OCI-LY7 (cell line): ENCODE measurements at regions of chr11 and their contacts with region 1.

Region 1: GRCh38 chr11:67482825-67483798 is at the start of gene AIP:
- DNase-seq: peak; percentile 99
- H3K4me3 ChIP-seq: peak within 1 kb of the TSS; percentile 71
- H3K27ac ChIP-seq: peak within 1 kb of the TSS; percentile 87
- H3K4me1 ChIP-seq: peaks cover 44% of the 10 kb centered on the region
- CTCF ChIP-seq: no peak
- total RNA-seq, gene AIP: 123 and 125 TPM in 2 replicates

Region 2: GRCh38 chr11:67353317-67354074 is 129.6 kb before region 1 on chr11 and contains the start of gene POLD4:
- CTCF ChIA-PET with region 1: no interaction called
- POLR2A ChIA-PET with region 1: interaction called, 3 read pairs
- intact Hi-C with region 1: loop called (anchors 5 kb)
- DNase-seq: peak; percentile 99
- H3K4me3 ChIP-seq: peak within 1 kb of the TSS; percentile 77
- H3K27ac ChIP-seq: peak within 1 kb of the TSS; percentile 93
- H3K4me1 ChIP-seq: peaks cover 78% of the 10 kb centered on the region
- CTCF ChIP-seq: no peak
- total RNA-seq, gene POLD4: 146 and 153 TPM in 2 replicates

Region 3: GRCh38 chr11:67391304-67392132 is 91.6 kb before region 1 on chr11 and contains the start of gene RAD9A:
- CTCF ChIA-PET with region 1: interaction called, 5 read pairs
- POLR2A ChIA-PET with region 1: no interaction called
- intact Hi-C with region 1: loop called (anchors 1 kb)
- DNase-seq: peak; percentile 98
- H3K4me3 ChIP-seq: peak within 1 kb of the TSS; percentile 78
- H3K27ac ChIP-seq: peak within 1 kb of the TSS; percentile 54
- H3K4me1 ChIP-seq: peaks cover 36% of the 10 kb centered on the region
- CTCF ChIP-seq: no peak
- total RNA-seq, gene RAD9A: 30.1 and 51.0 TPM in 2 replicates

Region 4: GRCh38 chr11:67439321-67439883 is 43.7 kb before region 1 on chr11:
- CTCF ChIA-PET with region 1: interaction called, 4 read pairs
- POLR2A ChIA-PET with region 1: interaction called, 6 read pairs
- intact Hi-C with region 1: loop called (anchors 2 kb)
- DNase-seq: no peak
- H3K4me3 ChIP-seq: peak overlapping the region; percentile 81
- H3K27ac ChIP-seq: peak overlapping the region; percentile 94
- H3K4me1 ChIP-seq: peaks cover 80% of the 10 kb centered on the region
- CTCF ChIP-seq: peak; percentile 72